OCI-LY7 (cell line): ENCODE measurements at regions of chr3 and their contacts with region 1.

Region 1: GRCh38 chr3:11651900-11652299 is 8.2 kb upstream of the VGLL4 start:
- DNase-seq: peak; percentile 56
- H3K4me3 ChIP-seq: no peak overlapping the region
- H3K27ac ChIP-seq: no peak overlapping the region
- H3K4me1 ChIP-seq: peaks cover 16% of the 10 kb centered on the region
- CTCF ChIP-seq: peak; percentile 83

Region 2: GRCh38 chr3:11236595-11237461 is 415.1 kb before region 1 on chr3:
- CTCF ChIA-PET with region 1: no interaction called
- POLR2A ChIA-PET with region 1: no interaction called
- intact Hi-C with region 1: loop called (anchors 2 kb)
- DNase-seq: peak; percentile 70
- H3K4me3 ChIP-seq: no peak overlapping the region
- H3K27ac ChIP-seq: no peak overlapping the region
- H3K4me1 ChIP-seq: no peaks in the 10 kb centered on the region
- CTCF ChIP-seq: peak; percentile 86

Region 3: DNA sequence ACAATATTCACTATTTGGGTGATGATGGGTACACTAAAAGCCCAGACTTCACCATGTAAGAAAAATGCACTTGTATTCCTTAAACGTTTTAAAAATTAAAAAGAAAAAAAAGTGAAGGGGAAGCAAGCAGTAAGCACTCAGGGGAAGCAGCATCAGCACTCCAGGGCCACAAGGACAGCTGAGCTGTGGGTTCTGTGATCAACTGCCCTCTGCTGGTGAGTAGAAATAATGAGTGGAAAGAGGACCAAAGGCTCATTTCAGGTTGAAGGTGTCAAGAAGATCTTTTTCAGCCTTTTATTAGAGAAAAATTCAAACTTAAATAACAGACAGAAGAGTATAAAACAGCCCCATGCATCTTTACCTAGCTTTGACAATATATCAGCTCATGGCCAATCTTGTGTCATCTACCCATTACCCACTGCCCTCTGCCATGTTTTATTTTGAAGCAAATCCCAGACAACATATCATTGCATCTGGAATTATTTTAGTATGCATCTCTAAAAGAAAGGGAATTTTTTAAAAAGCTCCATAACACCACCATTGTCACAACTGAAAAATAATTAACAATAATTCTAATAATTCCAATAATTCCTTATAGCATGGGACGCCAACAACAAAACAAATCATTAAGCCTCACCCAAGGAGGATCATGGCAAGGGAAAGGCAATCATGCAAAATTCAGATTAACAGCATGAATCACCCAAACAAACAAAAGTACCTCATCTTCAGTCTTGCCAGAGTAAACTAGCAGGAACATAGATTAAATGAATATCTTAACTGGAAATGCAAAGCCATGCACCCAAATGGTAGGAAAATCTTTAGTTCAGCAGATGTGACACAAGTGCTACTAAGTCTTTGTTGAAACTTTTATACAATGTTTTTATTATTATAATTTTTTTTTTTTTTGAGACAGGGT is 152.3 kb after region 1 on chr3:
- CTCF ChIA-PET with region 1: no interaction called
- POLR2A ChIA-PET with region 1: no interaction called
- intact Hi-C with region 1: loop called (anchors 1 kb)
- DNase-seq: peak; percentile 69
- H3K4me3 ChIP-seq: no peak overlapping the region
- H3K27ac ChIP-seq: no peak overlapping the region
- H3K4me1 ChIP-seq: no peaks in the 10 kb centered on the region
- CTCF ChIP-seq: peak; percentile 86

Region 4: DNA sequence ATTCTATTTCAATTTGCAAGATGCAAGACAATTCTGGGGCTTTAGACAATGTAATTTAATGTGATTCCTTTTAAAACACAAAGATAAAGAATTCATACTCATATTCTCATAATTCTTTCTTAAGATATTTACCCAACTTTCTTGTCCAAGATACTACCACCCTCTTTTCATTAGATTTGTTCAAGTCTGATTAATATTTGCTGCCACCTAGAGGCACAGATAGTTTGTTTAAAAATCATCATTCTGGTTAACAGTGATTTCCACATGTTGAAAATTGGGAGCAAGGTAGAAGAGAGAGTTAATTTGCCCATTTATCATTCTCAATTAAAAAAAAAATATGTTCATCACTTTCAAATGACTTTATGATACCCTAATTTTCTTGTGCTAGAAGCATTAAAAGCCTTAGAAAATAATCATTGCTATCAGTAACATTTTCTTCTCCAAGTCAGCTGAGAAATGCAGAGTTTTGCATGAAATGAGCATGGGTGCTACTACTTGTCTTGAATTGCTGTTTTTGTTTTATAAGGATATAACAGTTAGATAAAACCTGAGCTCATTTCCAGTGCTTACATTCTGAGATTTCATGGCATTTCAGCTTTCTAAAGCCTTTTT is 183.2 kb after region 1 on chr3:
- CTCF ChIA-PET with region 1: no interaction called
- POLR2A ChIA-PET with region 1: no interaction called
- intact Hi-C with region 1: loop called (anchors 2 kb)
- DNase-seq: peak; percentile 24
- H3K4me3 ChIP-seq: no peak overlapping the region
- H3K27ac ChIP-seq: no peak overlapping the region
- H3K4me1 ChIP-seq: no peaks in the 10 kb centered on the region
- CTCF ChIP-seq: peak; percentile 83